HEK293 (cell line): ENCODE measurements at regions of chr4 and their contacts with region 1.

Region 1: DNA sequence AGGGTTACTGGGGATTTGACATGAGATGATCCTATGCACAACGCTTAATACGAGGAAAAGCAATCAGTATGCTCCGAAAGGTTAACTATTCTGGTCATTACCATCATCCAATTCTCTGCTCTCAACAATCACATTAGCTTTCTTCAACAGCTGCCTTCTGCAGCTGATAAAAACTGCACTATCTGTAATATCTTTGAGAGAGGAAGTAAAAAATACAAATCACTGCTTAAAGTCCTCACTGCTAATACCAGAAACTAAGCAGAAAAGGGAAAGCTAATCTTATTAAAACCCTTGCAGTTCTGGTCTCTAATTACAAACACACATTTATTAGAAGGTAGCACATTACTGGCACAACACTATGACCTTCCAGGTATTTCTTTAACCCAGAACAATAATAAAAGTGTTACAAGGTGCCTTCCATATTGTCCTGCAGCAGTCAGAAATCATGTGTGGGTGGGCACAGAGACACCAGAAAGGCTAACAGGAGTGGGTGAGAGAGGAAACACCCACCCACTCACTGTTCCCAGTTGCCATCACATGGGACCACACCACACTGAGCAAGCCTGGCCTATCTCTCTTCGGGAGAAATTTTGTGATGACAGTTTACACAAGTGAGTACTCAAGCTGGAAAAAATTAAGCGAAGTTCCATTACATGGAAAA is 71.0 kb downstream of the RELL1 start:
- H3K4me3 ChIP-seq: no peak overlapping the region
- H3K27ac ChIP-seq: no peak overlapping the region
- H3K4me1 ChIP-seq: no peaks in the 10 kb centered on the region
- CTCF ChIP-seq: no peak

Region 2: GRCh38 chr4:37685161-37685822 is 70.1 kb after region 1 on chr4:
- CTCF ChIA-PET with region 1: no interaction called
- POLR2A ChIA-PET with region 1: interaction called, 13 read pairs
- H3K4me3 ChIP-seq: peak overlapping the region; percentile 70
- H3K27ac ChIP-seq: peak overlapping the region; percentile 71; the same call in 1 of the 2 replicates
- H3K4me1 ChIP-seq: no peaks in the 10 kb centered on the region
- CTCF ChIP-seq: no peak